ENCODE measurements at regions of chr5 and their contacts with region 1.

Region 1: GRCh38 chr5:174424219-174425053 is 299.9 kb upstream of the MSX2 start:
- DNase-seq: no peak
- H3K4me3 ChIP-seq: no peak overlapping the region
- H3K27ac ChIP-seq: no peak overlapping the region
- H3K4me1 ChIP-seq: no peaks in the 10 kb centered on the region
- H3K27me3 ChIP-seq: no peaks in the 10 kb centered on the region
- CTCF ChIP-seq: no peak

Region 2: GRCh38 chr5:173451031-173451430 is 973.4 kb before region 1 on chr5:
- intact Hi-C with region 1: no loop called
- DNase-seq: no peak
- H3K4me3 ChIP-seq: no peak overlapping the region
- H3K27ac ChIP-seq: no peak overlapping the region
- H3K4me1 ChIP-seq: no peaks in the 10 kb centered on the region
- H3K27me3 ChIP-seq: no peaks in the 10 kb centered on the region
- CTCF ChIP-seq: no peak

Region 3: DNA sequence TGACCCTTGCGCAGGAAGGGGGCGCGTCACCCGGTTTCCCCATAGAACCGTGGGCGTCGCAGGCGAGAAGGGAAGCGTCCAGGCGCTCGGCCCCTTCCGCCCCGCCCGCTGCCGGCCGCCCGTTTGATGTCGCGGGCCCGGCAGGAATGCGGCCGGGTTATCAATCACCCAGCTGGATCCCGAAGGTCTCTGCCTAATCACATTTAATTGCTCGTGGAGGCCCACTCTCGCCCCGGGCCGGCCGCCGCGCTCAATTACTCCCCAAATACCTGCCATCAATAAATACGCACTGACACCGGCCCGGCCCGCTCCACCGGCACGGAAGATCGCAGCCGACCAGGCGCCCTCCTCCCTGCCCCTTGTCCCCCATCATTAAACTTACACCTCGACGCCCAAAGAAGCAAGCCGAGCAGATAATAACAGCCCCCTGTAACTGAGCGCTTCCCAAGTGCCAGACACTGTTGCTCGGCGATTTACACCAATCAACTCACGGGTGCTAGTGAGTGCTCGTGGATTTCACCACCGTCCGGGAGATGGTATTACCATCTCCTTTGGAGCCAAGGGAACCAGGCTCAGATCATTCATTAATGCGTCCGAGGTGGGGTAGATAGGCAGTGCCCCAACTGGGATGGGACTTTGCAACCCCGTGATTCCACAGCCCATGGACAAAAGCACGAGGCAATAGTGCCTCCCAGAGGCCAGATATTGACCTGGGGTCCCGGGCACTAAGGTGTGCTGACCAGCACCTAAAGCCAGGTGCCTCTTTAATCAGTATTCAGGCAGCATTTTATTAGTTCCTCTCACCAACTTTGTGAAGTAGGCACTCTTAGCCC is 311.3 kb after region 1 on chr5:
- intact Hi-C with region 1: loop called (anchors 5 kb)
- DNase-seq: no peak
- H3K4me3 ChIP-seq: no peak overlapping the region
- H3K27ac ChIP-seq: no peak overlapping the region
- H3K4me1 ChIP-seq: no peaks in the 10 kb centered on the region
- H3K27me3 ChIP-seq: peaks cover 51% of the 10 kb centered on the region
- CTCF ChIP-seq: peak; percentile 39

Region 4: GRCh38 chr5:174935854-174936474 is 511.5 kb after region 1 on chr5:
- intact Hi-C with region 1: loop called (anchors 10 kb)
- DNase-seq: peak; percentile 37
- H3K4me3 ChIP-seq: no peak overlapping the region
- H3K27ac ChIP-seq: no peak overlapping the region
- H3K4me1 ChIP-seq: no peaks in the 10 kb centered on the region
- H3K27me3 ChIP-seq: no peaks in the 10 kb centered on the region
- CTCF ChIP-seq: peak; percentile 66

Measured in colonic mucosa (tissue), 4 donors.